SK-N-SH (cell line): ENCODE measurements at regions of chr2 and their contacts with region 1.

Region 1: DNA sequence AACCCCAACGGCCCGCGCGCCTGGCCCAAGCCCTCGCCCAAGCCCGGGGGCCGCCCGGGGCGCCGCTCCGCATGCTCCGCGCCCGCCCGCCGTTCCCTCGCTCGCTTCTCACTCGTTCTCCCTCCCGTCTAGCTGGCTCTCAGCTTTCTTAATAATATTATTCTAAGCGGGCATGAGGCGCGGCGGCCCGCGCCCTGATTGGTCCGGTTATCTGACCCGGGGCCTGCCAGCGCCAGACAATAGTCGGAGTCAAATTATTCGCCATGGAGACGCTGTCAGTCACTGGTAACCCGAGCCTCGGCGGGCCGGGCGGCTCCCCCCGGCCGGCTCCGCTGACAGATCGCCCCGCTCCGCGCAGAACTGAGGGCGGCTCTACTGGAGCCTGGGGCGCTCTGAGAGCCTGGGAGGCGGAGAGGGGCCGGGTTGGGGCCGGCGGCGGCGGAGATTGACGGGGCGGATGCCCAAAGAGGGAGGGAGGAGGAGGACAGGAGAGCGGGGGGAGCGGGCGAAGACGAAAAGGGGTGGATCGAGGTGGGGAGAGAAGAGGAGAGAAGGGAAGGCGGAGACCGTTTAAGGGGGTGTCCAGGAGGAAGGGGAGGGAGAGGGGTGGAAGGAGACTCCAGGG is at the start of gene SIX2:
- DNase-seq: peak; percentile 99
- H3K4me3 ChIP-seq: peak within 1 kb of the TSS; percentile 55 to 62
- H3K27ac ChIP-seq: peak within 1 kb of the TSS; percentile 17 to 72; a peak in 3 of 4 replicates
- H3K4me1 ChIP-seq: peaks cover 0 to 15% of the 10 kb centered on the region in 2 experiments; a peak in 1 of 4 replicates
- H3K27me3 ChIP-seq: no peaks in the 10 kb centered on the region
- CTCF ChIP-seq: no peak
- EP300 ChIP-seq: peak in 1 of 2 experiments; percentile 64; a peak in 1 of 4 replicates
- RAD21 ChIP-seq: no peak
- polyA plus RNA-seq, gene SIX2: 0.45 and 0.76 TPM in 2 replicates

Region 2: GRCh38 chr2:43622931-43623451 is 1386.4 kb before region 1 on chr2:
- CTCF ChIA-PET with region 1: no interaction called
- POLR2A ChIA-PET with region 1: no interaction called
- DNase-seq: peak; percentile 52
- H3K4me3 ChIP-seq: no peak overlapping the region
- H3K27ac ChIP-seq: peak overlapping the region in 1 of 2 experiments; percentile 17; a peak in 2 of 4 replicates
- H3K4me1 ChIP-seq: peaks cover 0 to 3% of the 10 kb centered on the region in 2 experiments; a peak in 2 of 4 replicates
- H3K27me3 ChIP-seq: no peaks in the 10 kb centered on the region
- CTCF ChIP-seq: no peak
- EP300 ChIP-seq: no peak
- RAD21 ChIP-seq: no peak

Region 3: DNA sequence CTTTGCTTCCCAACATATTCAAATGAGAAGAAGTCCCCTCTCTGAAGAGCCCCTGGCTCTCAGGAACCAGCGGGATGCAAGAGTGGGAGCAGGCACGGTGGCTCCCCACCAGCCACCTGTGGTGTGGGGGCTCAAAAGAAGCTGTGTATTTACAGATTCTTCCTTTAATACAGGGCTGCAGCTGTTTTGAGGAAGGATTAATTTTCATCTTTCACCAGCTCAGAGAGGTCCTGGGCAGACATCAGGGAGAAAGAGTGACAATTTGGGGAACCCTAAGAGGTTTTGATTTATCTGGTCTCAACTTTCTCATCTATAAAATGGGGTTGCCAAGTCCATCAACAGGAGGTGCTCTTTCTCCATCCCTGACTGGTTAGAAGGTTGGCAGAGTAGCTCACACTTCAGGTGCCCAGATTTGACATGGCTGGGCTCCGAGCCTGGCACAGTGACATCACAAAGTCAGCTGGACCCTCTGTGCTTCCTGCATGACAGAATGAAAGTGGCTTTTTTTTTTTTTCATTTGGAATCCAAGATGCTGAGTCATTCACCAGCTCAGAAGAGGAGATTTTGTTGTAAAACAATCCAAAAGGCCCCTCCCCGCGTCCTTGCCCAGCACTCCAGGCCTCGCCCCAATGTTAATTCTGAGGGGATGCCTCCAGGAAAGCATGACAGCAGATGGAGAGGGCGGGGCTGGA is 15.3 kb after region 1 on chr2:
- CTCF ChIA-PET with region 1: interaction called, 112 read pairs
- POLR2A ChIA-PET with region 1: no interaction called
- DNase-seq: no peak
- H3K4me3 ChIP-seq: no peak overlapping the region
- H3K27ac ChIP-seq: no peak overlapping the region
- H3K4me1 ChIP-seq: no peaks in the 10 kb centered on the region; a peak in 1 of 4 replicates
- H3K27me3 ChIP-seq: no peaks in the 10 kb centered on the region
- CTCF ChIP-seq: peak; percentile 67
- EP300 ChIP-seq: peak in 1 of 2 experiments; percentile 82; a peak in 2 of 4 replicates
- RAD21 ChIP-seq: peak; percentile 52